ENCODE measurements at regions of chr11 and their contacts with region 1.

Region 1: GRCh38 chr11:101390539-101390938 is 193.3 kb downstream of the TRPC6 start:
- DNase-seq: no peak
- ATAC-seq: no peak

Region 2: GRCh38 chr11:101436511-101437142 is 46.1 kb after region 1 on chr11:
- intact Hi-C with region 1: loop called in 1 of 2 experiments (anchors 5 kb)
- DNase-seq: peak in 1 of 2 donors; percentile 39
- ATAC-seq: no peak